ENCODE measurements at regions of chr7 and their contacts with region 1.

Region 1: DNA sequence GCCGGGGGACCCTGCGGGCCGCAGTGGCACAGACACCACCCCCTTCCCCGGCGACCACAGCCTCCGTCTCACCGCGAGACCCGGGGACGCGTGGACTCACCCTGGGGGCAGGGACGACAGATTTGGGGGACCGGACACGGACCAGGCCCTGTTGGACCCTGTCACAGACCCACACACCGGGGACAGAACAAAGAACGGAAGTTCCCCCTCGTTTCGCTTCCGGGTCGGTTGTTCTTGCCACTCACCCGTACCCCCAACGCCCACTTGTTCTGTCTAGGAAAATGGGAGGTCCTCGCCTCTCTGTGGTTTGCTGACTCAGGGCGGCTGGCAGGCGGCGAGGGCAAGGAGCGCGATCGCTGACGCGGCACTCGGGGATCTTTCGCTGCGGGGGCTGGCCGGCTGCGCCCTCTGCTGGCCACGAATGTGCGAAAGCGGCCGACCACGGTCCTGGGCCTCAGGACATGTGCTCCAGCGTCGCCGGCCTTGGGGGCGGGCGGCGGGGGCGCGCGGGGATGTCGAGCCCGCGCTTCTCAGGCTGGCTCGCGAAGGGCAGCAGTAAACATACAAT is at the start of gene ZNF3:
- DNase-seq: peak; percentile 99
- H3K4me3 Mint-ChIP-seq: peak within 1 kb of the TSS; percentile 93
- H3K27ac Mint-ChIP-seq: peak within 1 kb of the TSS; percentile 91
- H3K4me1 Mint-ChIP-seq: peaks cover 23% of the 10 kb centered on the region
- H3K27me3 Mint-ChIP-seq: peaks cover 10% of the 10 kb centered on the region
- total RNA-seq, gene ZNF3: 21.5 and 23.3 TPM in 2 replicates

Region 2: DNA sequence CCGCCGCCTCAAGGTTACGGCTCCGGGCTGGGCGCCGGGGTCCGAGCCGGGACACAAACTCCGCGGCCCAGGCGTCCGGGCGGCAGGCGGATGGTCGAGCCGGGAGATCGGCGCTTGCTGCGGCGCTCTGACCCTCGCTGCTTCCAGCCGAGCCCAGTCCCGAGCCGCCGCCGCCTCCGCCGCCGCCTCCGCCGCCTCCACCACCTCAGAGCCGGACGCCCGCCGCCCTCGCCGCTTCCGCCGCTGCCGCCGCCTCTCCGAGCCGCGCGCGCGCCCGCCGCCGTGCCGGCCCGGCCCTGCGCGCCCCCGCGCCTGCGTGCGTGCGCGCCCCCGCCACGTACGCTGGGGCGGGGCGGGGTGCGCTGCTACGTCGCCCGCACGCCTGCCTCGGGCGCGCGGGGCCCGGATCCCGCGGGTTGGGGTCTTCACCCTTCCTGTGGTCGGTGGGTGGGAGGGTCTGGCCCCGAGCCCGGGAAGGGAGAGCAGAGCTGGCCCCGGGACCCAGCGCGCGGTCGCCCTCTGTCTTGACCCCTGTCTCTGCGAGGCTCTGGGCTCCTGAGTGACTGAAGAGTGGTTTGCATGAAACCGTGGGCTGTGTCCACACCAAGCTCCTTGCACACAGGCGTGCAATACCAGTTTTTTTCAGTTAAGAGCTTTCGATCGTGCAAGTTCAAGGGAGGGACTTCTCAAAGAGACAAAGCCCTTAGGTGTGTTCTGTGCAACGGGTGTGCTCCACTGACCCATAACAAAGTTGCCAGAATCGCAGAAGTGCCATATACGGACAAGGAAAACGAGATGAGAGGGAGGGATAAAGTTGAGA is 937.6 kb before region 1 on chr7 and contains the start of gene SMURF1:
- intact Hi-C with region 1: loop called (anchors 5 kb)
- DNase-seq: peak; percentile 94
- H3K4me3 Mint-ChIP-seq: peak within 1 kb of the TSS; percentile 98
- H3K27ac Mint-ChIP-seq: peak within 1 kb of the TSS; percentile 88
- H3K4me1 Mint-ChIP-seq: peaks cover 32% of the 10 kb centered on the region
- H3K27me3 Mint-ChIP-seq: peaks cover 4% of the 10 kb centered on the region
- total RNA-seq, gene SMURF1: 12.5 and 13.1 TPM in 2 replicates

Region 3: DNA sequence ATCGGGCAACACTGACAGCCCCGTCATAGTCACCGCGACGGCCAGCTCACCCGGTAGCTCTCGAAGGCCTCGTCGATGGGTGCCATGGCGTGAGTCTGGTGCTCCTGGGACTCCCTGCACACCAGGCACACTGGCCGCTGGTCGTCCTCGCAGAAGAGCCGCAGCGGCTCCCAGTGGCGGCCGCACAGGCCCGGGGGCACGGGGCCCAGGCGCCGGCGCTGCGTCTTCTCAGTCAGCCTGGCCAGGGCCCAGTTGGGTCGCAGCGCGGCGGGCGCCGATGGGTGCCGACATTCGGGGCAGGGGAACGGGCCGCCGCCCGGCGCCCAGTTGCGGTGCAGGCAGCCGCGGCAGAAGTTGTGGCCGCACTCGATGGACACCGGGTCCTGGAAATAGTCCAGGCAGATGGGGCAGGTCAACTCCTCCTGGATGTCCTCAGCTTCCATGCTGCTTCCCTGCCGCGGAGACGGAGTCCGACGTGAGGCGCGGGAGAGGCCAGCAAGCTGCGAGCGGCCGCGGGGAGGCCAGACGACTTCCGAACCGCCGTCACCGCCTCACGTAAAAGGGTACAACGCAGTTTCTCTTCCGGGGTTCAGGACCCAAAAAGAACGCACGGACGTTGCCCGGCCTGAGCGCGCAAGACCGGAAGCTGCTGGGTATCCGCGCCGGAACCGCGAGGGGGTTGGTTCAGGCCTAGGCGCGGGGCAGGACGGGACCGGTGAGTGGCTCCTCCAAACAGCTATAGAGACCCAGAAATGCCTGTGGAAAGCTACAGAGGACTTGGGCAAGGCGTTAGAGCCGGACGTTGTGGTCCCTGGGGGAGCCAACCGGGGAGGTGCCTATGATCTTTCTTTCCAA is 162.4 kb before region 1 on chr7 and contains the start of gene TRIM4:
- intact Hi-C with region 1: loop called (anchors 2 kb)
- DNase-seq: peak; percentile 97
- H3K4me3 Mint-ChIP-seq: peak within 1 kb of the TSS; percentile 95
- H3K27ac Mint-ChIP-seq: peak within 1 kb of the TSS; percentile 92
- H3K4me1 Mint-ChIP-seq: peaks cover 39% of the 10 kb centered on the region
- H3K27me3 Mint-ChIP-seq: no peaks in the 10 kb centered on the region
- total RNA-seq, gene TRIM4: 22.3 and 24.0 TPM in 2 replicates

Region 4: DNA sequence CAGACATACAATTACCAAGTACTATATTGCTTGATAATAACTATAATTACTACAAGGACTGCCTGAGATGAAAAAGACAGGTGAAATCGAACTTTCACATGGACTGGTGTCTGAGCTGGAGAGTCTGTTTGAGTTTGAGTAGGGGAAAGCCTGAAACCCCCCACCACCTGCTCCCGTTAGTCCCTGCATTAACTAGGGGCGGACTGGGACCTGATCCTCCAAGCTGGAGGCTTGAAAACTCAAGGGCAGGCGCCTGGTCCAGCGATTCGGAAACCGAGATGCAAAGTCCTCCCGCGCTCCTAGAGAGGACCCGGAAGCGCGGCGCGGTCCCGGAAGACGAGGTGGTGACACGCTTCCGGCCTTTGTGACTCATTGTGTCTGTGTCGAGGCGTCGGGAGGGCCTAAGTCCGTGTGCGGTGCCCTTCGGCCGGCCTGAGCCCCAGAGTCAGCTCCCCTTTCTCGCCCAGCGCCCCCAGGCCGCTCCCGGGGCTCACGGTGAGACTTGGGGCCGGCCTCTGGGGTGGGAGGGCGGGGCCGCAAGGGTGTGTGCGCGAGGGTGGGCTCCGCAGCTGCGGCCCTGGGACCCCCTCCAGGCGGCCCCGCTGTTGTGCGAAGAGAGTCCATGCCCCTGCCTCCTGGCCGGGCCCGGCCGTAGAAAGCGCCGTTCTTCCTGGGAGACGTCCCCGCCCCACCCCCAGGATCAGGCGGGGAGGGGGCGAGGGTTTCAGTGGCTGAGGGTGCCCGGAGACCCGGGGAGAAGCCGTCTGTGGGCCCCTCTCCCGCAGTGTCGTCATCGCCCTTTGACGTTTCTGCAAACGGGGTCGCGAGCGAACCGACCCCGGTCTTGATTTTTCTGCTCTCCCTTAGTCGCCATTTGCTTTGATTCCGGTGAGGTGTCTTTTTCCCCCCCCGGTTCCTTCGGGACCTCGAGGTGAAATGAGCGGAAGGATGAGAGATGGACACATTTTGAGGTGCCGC is 66.1 kb before region 1 on chr7 and contains the start of gene ZKSCAN1:
- intact Hi-C with region 1: loop called (anchors 1 kb)
- DNase-seq: peak; percentile 96
- H3K4me3 Mint-ChIP-seq: peak within 1 kb of the TSS; percentile 95
- H3K27ac Mint-ChIP-seq: peak within 1 kb of the TSS; percentile 94
- H3K4me1 Mint-ChIP-seq: peaks cover 31% of the 10 kb centered on the region
- H3K27me3 Mint-ChIP-seq: no peaks in the 10 kb centered on the region
- total RNA-seq, gene ZKSCAN1: 54.8 and 56.3 TPM in 2 replicates

Region 5: GRCh38 chr7:100035876-100036275 is 45.7 kb before region 1 on chr7:
- intact Hi-C with region 1: no loop called
- DNase-seq: no peak
- H3K4me3 Mint-ChIP-seq: no peak overlapping the region
- H3K27ac Mint-ChIP-seq: no peak overlapping the region
- H3K4me1 Mint-ChIP-seq: peaks cover 7% of the 10 kb centered on the region
- H3K27me3 Mint-ChIP-seq: no peaks in the 10 kb centered on the region

Region 6: GRCh38 chr7:100101016-100101862 is 19.6 kb after region 1 on chr7 and contains the starts of genes AP4M1 and MCM7:
- intact Hi-C with region 1: loop called (anchors 1 kb)
- DNase-seq: peak; percentile 99
- H3K4me3 Mint-ChIP-seq: peak within 1 kb of the TSS; percentile 94
- H3K27ac Mint-ChIP-seq: peak within 1 kb of the TSS; percentile 94
- H3K4me1 Mint-ChIP-seq: peaks cover 35% of the 10 kb centered on the region
- H3K27me3 Mint-ChIP-seq: no peaks in the 10 kb centered on the region
- total RNA-seq, gene AP4M1: 13.5 and 16.4 TPM in 2 replicates
- total RNA-seq, gene MCM7: 464 and 469 TPM in 2 replicates